ENCODE measurements at regions of chr20 and their contacts with region 1.

Region 1: DNA sequence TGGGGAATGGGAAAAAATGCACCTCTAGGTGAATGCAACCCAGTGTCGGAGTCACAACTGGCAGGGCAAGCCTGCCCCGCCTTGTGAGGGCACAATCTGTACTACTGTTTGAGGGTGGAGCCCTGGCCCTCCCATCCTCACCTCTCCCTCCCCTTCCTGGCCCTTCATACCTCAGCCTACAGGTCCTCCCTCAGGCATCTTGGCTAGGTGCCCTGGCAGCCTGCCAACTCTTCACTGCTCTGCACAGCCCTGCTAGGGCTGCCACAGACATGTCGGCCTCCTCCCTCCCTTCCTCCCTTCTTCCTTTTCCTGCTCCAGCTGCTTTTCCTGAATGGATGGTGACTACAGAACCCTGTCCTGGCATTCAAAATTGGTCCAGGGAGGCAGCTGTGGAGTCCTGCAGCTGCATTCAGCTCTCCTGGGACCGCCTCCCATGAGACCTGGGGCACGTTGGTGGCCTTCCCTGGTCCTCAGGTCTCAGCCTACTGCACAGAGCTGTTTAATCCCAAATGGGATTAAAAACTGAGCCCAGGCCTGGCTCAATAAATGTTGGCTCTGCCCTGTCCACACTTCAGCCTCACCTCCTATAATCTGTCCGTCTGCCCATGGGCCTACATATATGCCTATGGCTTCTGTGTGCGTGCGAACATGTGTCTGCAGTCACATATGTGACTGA is 52.7 kb downstream of the CDH22 start:
- DNase-seq: peak; percentile 32 to 87
- ATAC-seq: peak in 1 of 2 donors; percentile 64
- H3K4me3 ChIP-seq: no peak overlapping the region
- H3K27ac ChIP-seq: no peak overlapping the region
- H3K4me1 ChIP-seq: peaks cover 0 to 9% of the 10 kb centered on the region in 2 donors
- H3K27me3 ChIP-seq: peaks cover 18 to 21% (median 18%) of the 10 kb centered on the region in 3 donors
- CTCF ChIP-seq: no peak
- POLR2A ChIP-seq: no peak

Region 2: GRCh38 chr20:46132705-46133120 is 122.9 kb before region 1 on chr20:
- in situ Hi-C with region 1: loop called in 1 of 4 experiments (anchors 10 kb)
- intact Hi-C with region 1: loop called (anchors 2 kb)
- DNase-seq: peak; percentile 46 to 50
- ATAC-seq: peak; percentile 56 to 82
- H3K4me3 ChIP-seq: no peak overlapping the region
- H3K27ac ChIP-seq: no peak overlapping the region
- H3K4me1 ChIP-seq: peaks cover 5 to 7% of the 10 kb centered on the region in 2 donors
- H3K27me3 ChIP-seq: no peaks in the 10 kb centered on the region
- CTCF ChIP-seq: peak; percentile 79 to 87 (median 84)
- POLR2A ChIP-seq: no peak

Region 3: DNA sequence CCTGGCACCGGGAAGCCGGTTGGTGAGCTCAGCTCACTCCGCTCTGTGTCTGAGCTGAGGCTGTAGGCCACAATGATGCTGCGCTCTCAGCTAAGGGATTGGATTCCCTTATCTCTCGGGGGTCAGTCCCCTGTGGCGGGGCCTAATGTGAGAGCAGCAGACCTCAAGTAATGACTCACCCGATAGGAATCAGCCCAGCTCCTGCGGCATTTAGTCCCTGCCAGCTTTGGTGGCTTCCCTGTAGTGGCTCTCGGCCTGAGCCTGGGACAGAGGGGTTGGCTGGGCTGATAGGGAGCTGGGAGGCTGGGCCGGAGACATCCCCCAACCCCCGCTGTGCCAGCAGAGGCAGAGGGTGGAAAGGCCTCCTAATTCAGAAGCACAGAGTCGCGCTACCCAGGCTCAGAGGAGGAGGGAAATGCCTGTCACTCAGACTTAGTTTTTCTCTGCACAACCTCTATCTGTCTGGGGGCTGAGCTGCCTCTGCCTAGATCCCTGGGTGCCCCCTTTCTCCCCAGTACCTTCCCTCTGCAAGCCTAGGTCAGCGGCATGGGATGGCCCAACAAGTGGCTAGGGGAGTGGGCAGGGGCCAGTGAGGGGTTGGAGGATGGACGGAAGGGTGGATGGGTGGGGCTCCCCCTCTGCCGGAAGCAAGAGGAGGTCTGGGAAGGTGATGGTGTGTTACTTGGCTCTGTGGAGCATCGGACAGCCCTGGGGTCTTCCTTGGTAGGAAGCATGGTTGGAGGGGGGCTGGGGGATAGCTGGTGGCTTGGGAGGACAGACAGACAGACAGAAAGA is 39.5 kb before region 1 on chr20:
- in situ Hi-C with region 1: no loop called
- intact Hi-C with region 1: loop called (anchors 1 kb)
- DNase-seq: peak; percentile 29 to 73
- ATAC-seq: peak; percentile 41 to 59
- H3K4me3 ChIP-seq: no peak overlapping the region
- H3K27ac ChIP-seq: peak overlapping the region; percentile 19 to 86 (median 66)
- H3K4me1 ChIP-seq: peaks cover 19 to 36% of the 10 kb centered on the region in 2 donors
- H3K27me3 ChIP-seq: peaks cover 0 to under 1% (median 0%) of the 10 kb centered on the region in 3 donors
- CTCF ChIP-seq: no peak
- POLR2A ChIP-seq: no peak

Region 4: DNA sequence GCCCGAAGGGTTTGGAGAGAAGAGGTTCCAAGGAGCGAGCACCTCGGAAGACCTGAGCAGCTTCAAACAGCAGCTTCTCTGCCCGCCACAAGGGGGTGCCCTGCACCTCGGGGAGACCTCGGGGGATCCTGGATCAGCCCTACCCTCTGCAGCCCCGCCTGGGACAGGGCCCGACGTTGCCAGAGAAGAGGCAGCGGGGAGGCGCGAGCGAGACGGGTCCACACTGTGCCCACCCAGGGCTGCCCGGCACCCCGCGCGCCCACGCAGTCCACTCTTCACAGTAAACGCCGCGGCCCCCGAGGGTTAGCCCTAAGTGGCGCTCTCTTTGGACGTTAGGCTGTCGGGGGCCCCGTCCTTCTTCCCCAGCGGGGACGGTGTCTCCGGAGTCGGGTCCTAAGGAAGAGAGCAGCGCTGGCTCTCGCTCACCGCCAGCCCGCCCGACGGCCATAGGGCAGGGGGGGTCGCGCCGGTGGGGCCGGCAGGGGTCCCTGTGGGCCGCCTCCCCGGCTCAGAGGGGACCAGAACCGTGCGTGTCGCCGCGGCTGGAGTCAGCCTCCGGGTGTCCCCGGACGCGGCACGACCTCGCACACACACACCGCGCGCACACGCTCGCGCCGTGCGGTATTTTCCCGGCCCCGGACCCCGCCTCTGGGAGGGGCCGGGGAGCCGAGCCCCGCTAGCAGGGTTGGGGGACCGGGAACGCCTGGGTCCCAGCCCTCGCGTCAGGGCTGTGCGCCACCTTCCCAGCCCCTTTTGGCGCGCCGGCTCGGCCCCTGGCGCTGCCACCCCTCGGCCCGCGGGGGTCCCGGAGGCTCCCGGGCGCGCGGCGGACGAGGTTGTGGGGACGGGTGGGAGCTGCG is 51.8 kb after region 1 on chr20:
- in situ Hi-C with region 1: no loop called
- intact Hi-C with region 1: loop called (anchors 5 kb)
- DNase-seq: peak; percentile 17 to 29
- ATAC-seq: peak; percentile 61 to 66
- H3K4me3 ChIP-seq: peak overlapping the region; percentile 39 to 57 (median 45)
- H3K27ac ChIP-seq: no peak overlapping the region
- H3K4me1 ChIP-seq: peaks cover 3 to 6% of the 10 kb centered on the region in 2 donors
- H3K27me3 ChIP-seq: peaks cover 55 to 66% (median 56%) of the 10 kb centered on the region in 3 donors
- CTCF ChIP-seq: peak; percentile 71 to 90 (median 77)
- POLR2A ChIP-seq: no peak

Region 5: GRCh38 chr20:46406199-46406985 is 150.8 kb after region 1 on chr20 and contains the start of gene ELMO2:
- in situ Hi-C with region 1: no loop called
- intact Hi-C with region 1: loop called (anchors 2 kb)
- DNase-seq: peak; percentile 97 to 98
- ATAC-seq: peak; percentile 93 to 94
- H3K4me3 ChIP-seq: peak within 1 kb of the TSS; percentile 83 to 98 (median 90)
- H3K27ac ChIP-seq: peak within 1 kb of the TSS; percentile 94 to 98 (median 96)
- H3K4me1 ChIP-seq: peaks cover 52 to 56% of the 10 kb centered on the region in 2 donors
- H3K27me3 ChIP-seq: no peaks in the 10 kb centered on the region
- CTCF ChIP-seq: peak in 4 of 5 experiments; percentile 34 to 50 (median 42)
- POLR2A ChIP-seq: peak; percentile 86 to 88
- total RNA-seq, gene ELMO2: 47.6 to 67.5 (median 53.6) TPM

Region 6: GRCh38 chr20:46568570-46569129 is 313.1 kb after region 1 on chr20:
- in situ Hi-C with region 1: no loop called
- intact Hi-C with region 1: no loop called
- DNase-seq: peak; percentile 15 to 58
- ATAC-seq: peak in 1 of 2 donors; percentile 55
- H3K4me3 ChIP-seq: no peak overlapping the region
- H3K27ac ChIP-seq: no peak overlapping the region
- H3K4me1 ChIP-seq: peaks cover 0 to 6% of the 10 kb centered on the region in 2 donors
- H3K27me3 ChIP-seq: no peaks in the 10 kb centered on the region
- CTCF ChIP-seq: no peak
- POLR2A ChIP-seq: no peak